Dorsolateral prefrontal cortex (tissue), 120 donors: ENCODE measurements at regions of chr22 and their contacts with region 1.

Region 1: DNA sequence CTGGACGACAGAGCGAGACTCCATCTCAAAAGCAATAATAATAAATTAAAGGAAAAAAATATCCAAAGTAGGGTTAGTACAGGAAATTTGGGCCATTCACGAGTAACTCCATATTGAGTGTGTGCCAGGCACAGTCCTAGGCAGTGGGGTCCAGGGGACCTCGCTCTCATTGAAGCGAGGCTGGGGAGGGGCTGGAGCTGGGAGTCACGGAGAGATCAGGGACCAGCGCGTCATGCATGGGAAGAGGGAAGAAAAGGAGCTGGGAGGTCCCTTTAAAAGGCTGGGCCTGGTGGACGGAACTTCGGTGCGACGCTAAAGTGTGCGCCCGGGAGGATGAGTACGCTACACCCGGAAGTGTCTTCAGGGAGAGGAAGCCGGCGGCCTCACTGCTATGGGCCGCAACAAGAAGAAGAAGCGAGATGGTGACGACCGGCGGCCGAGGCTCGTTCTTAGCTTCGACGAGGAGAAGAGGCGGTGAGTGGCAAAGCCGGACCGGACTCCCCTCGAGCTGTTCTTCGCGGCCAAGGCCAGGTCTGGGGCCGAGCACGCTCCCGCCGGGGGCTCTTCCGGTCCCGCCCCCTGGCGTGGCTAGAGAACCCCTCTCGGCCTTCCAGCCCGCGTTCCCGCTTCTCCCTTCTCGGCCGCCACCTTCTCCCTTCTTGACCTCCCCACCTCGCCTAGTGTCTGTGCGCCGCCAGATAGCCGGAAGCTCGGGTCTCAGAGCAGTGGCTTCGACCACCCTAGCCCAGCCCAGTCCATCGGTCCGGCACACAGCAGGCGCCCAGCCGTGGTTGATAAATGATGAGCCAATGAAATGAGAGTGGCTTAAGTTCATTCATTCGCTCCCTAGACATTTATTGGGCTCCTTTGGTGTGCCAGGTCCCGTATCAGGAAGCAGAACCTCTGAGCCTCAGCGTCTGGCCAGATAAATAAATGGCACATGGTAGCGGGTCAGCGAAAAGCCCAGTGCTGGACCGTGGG is at the start of gene NOL12:
- DNase-seq: peak; percentile 73 to 88 (median 83)
- H3K4me3 ChIP-seq: peak within 1 kb of the TSS; percentile 57 to 99 (median 88)
- H3K27ac ChIP-seq: peak within 1 kb of the TSS; percentile 36 to 98 (median 90)
- H3K27me3 ChIP-seq: no peaks in the 10 kb centered on the region
- CTCF ChIP-seq: peak in 42 of 56 donors; percentile 4 to 66 (median 40)
- total RNA-seq, gene NOL12: 14.9 to 41.9 (median 27.5) TPM

Region 2: GRCh38 chr22:37544955-37545699 is 141.2 kb before region 1 on chr22:
- intact Hi-C with region 1: loop called in 1 of 2 experiments (anchors 10 kb)
- DNase-seq: peak in 4 of 10 donors; percentile 49 to 73 (median 62)
- H3K4me3 ChIP-seq: peak overlapping the region in 10 of 59 donors; percentile 3 to 26 (median 16)
- H3K27ac ChIP-seq: peak overlapping the region; percentile 60 to 98 (median 95)
- H3K27me3 ChIP-seq: peaks cover 0 to 6% (median 0%) of the 10 kb centered on the region in 45 donors
- CTCF ChIP-seq: peak; percentile 12 to 79 (median 62)

Region 3: GRCh38 chr22:37623075-37624016 is 62.9 kb before region 1 on chr22:
- intact Hi-C with region 1: loop called (anchors 5 kb)
- DNase-seq: peak in 8 of 10 donors; percentile 40 to 77 (median 60)
- H3K4me3 ChIP-seq: no peak overlapping the region
- H3K27ac ChIP-seq: peak overlapping the region in 19 of 59 donors; percentile 2 to 65 (median 35)
- H3K27me3 ChIP-seq: no peaks in the 10 kb centered on the region
- CTCF ChIP-seq: peak; percentile 59 to 92 (median 82)

Region 4: GRCh38 chr22:37658133-37659065 is 27.9 kb before region 1 on chr22 and contains the start of gene PDXP:
- intact Hi-C with region 1: loop called in 1 of 2 experiments (anchors 2 kb)
- DNase-seq: peak; percentile 91 to 99 (median 98)
- H3K4me3 ChIP-seq: peak within 1 kb of the TSS; percentile 49 to 82 (median 71)
- H3K27ac ChIP-seq: peak within 1 kb of the TSS in 56 of 59 donors; percentile 20 to 92 (median 79)
- H3K27me3 ChIP-seq: no peaks in the 10 kb centered on the region
- CTCF ChIP-seq: peak in 10 of 56 donors; percentile 7 to 50 (median 23)
- total RNA-seq, gene PDXP: 62.4 to 280 (median 189) TPM

Region 5: DNA sequence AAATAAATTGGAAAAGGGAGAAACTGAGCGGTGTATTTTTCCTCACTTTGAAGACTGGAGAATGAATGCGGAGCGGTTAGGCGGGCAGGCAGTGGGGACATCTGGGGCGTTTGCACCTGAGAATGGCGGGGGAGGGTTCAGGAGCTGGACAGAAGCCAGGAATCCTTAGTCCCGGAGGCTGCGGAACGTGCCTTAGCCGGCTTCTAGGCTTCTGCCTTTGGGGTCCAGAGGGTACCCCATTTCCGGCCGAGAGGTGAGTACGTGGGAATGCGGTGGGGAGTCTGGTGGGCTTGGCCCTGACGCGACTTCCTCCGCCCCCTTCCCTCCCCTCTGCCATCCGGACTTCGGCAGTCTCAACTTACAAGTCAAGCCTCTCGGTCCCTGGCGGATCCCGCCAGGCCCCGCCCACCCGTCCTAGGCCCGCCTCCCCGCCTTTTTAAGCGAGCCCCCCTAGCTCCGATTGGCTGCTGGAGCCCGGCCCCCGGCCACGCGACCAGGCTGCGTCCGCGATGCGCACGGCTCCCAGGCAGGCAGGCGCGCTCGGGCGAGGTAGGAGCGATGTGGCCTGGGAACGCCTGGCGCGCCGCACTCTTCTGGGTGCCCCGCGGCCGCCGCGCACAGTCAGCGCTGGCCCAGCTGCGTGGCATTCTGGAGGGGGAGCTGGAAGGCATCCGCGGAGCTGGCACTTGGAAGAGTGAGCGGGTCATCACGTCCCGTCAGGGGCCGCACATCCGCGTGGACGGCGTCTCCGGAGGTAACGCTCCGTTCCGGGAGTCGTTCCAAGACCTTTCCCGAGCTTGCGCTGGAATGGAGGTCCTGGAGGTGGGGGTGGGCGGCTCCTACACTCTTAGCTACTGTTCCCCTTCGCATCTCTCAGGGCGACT is 121.4 kb after region 1 on chr22 and contains the start of gene GCAT:
- intact Hi-C with region 1: loop called in 1 of 2 experiments (anchors 10 kb)
- DNase-seq: peak; percentile 89 to 96 (median 94)
- H3K4me3 ChIP-seq: peak within 1 kb of the TSS; percentile 44 to 91 (median 75)
- H3K27ac ChIP-seq: peak within 1 kb of the TSS in 37 of 59 donors; percentile 13 to 94 (median 55)
- H3K27me3 ChIP-seq: no peaks in the 10 kb centered on the region
- CTCF ChIP-seq: peak in 7 of 56 donors; percentile 12 to 31 (median 25)
- total RNA-seq, gene GCAT: 19.4 to 39.6 (median 27.9) TPM